Natural killer cell (primary cell): ENCODE measurements at regions of chr7 and their contacts with region 1.

Region 1: GRCh38 chr7:63071920-63072319 is 926.7 kb upstream of the ZNF722 start:
- DNase-seq: no peak
- ATAC-seq: no peak
- H3K4me3 ChIP-seq: no peak overlapping the region
- H3K4me3 Mint-ChIP-seq: no peak overlapping the region
- H3K27ac ChIP-seq: no peak overlapping the region
- H3K27ac Mint-ChIP-seq: no peak overlapping the region
- H3K4me1 ChIP-seq: no peaks in the 10 kb centered on the region
- H3K4me1 Mint-ChIP-seq: no peaks in the 10 kb centered on the region
- H3K27me3 ChIP-seq: no peaks in the 10 kb centered on the region
- H3K27me3 Mint-ChIP-seq: no peaks in the 10 kb centered on the region
- CTCF ChIP-seq: no peak

Region 2: DNA sequence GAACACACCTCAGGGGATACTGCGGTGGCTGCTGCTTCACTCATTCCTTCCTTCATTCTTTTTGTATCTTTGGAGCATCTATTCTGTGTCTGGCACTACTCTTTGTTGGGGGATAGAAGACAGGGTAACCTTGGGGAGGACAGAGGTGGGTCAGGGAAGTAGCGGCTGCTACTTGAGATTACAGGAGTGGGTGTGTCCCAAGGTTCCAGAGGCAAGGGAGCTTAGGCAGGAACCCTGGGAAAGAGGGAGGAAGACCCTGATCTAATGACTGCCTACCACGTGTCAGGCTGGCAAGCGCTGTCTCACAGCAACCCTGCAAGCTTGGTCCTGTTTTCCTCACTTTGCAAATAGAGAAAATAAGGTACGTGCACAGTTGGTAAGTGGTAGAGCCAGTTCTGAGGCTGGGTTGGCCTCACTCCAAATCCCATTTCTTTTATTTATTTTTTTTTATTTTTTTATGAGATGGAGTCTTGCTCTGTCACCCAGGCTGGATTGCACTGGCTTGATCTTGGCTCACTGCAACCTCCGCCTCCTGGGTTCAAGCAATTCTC is 59.2 kb before region 1 on chr7:
- intact Hi-C with region 1: loop called (anchors 10 kb)
- DNase-seq: no peak
- ATAC-seq: no peak
- H3K4me3 ChIP-seq: no peak overlapping the region
- H3K4me3 Mint-ChIP-seq: no peak overlapping the region
- H3K27ac ChIP-seq: no peak overlapping the region
- H3K27ac Mint-ChIP-seq: no peak overlapping the region
- H3K4me1 ChIP-seq: no peaks in the 10 kb centered on the region
- H3K4me1 Mint-ChIP-seq: no peaks in the 10 kb centered on the region
- H3K27me3 ChIP-seq: no peaks in the 10 kb centered on the region
- H3K27me3 Mint-ChIP-seq: no peaks in the 10 kb centered on the region
- CTCF ChIP-seq: no peak

Region 3: GRCh38 chr7:63087575-63088190 is 15.8 kb after region 1 on chr7:
- intact Hi-C with region 1: no loop called
- DNase-seq: no peak
- ATAC-seq: no peak
- H3K4me3 ChIP-seq: no peak overlapping the region
- H3K4me3 Mint-ChIP-seq: no peak overlapping the region
- H3K27ac ChIP-seq: no peak overlapping the region
- H3K27ac Mint-ChIP-seq: no peak overlapping the region
- H3K4me1 ChIP-seq: no peaks in the 10 kb centered on the region
- H3K4me1 Mint-ChIP-seq: no peaks in the 10 kb centered on the region
- H3K27me3 ChIP-seq: no peaks in the 10 kb centered on the region
- H3K27me3 Mint-ChIP-seq: no peaks in the 10 kb centered on the region
- CTCF ChIP-seq: no peak